Dorsolateral prefrontal cortex (tissue), 120 donors: ENCODE measurements at regions of chr14 and their contacts with region 1.

Region 1: DNA sequence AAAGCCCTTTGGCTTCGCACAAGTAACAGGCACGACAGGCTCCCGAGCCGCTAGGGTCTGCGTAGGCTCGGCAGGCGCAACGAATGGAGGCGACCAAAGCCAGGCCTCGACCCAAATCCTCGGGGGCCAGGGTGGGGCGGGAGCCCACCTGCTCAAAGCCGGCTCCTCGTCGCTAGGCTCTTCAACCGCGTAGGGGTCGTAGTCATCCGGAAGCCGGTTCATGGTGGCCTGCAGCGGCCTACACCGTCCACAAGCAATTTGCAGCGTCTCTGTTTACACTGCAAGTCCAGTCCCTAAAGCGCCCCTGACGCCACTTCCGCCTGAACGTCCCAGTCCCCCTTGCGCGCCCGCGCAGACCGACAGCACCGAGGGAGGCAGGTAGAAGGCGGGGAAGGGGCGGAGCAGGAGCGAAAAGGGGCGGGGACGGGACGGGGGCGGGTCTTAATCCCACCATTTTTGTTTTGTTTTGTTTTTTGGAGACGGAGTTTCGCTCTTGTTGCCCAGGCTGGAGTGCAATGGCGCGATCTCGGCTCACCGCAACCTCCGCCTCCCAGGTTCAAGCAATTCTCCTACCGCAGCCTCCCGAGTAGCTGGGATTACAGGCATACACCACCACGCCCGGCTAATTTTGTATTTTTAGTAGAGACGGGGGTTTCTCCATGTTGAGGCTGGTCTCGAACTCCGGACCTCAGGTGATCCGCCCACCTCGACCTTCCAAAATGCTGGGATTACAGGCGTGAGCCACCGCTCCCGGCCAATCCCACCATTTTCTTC is at the start of gene EAPP:
- DNase-seq: peak; percentile 98 to 99 (median 99)
- H3K4me3 ChIP-seq: peak within 1 kb of the TSS; percentile 65 to 100 (median 92)
- H3K27ac ChIP-seq: peak within 1 kb of the TSS; percentile 58 to 98 (median 94)
- H3K27me3 ChIP-seq: no peaks in the 10 kb centered on the region
- CTCF ChIP-seq: peak in 32 of 56 donors; percentile 9 to 50 (median 25)
- total RNA-seq, gene EAPP: 16.5 to 48.5 (median 35.5) TPM

Region 2: DNA sequence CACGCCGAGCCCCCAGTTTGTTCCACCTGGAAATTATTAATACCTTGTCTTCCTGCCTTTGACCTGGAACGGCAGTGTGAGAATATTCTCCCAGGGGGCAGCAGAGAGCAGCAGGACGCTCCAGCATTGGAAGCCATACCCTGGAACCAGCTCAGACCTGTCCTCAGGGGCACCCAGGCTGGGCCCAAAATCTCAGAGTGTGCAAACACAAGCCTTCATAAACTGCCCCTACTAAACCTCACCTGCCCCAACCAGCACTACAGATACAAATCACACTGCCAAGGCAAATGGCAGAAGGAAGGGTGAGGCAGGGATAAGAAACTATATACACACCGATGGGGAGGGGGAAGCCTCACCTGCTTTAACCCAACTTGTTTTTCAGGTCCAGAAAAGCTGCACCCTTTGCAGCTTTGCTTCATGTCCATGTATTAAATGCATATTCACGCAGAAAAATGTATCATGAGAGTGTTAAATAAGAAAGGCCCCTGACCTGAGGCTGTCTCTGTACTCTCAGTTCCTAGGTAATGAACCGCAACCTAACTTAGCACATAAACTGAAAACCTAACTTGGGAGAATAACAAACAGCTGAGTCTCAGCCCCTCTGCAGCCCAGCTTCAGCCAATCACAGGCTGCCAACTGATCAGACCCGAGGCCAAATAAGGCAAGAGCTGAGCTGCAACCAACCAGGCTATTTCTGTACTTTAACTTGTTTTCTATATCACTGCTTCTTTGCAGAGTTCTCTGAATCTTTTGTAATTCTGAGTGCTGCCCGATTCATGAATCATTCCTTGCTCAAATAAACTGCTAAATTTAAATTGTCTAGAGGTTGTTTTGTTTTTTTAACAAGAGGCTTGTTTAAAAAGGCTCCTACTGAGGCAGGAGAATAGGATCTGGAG is 207.6 kb before region 1 on chr14:
- intact Hi-C with region 1: loop called in 1 of 2 experiments (anchors 10 kb)
- DNase-seq: peak in 9 of 10 donors; percentile 22 to 56 (median 38)
- H3K4me3 ChIP-seq: no peak overlapping the region
- H3K27ac ChIP-seq: no peak overlapping the region
- H3K27me3 ChIP-seq: no peaks in the 10 kb centered on the region
- CTCF ChIP-seq: peak in 55 of 56 donors; percentile 27 to 77 (median 64)

Region 3: DNA sequence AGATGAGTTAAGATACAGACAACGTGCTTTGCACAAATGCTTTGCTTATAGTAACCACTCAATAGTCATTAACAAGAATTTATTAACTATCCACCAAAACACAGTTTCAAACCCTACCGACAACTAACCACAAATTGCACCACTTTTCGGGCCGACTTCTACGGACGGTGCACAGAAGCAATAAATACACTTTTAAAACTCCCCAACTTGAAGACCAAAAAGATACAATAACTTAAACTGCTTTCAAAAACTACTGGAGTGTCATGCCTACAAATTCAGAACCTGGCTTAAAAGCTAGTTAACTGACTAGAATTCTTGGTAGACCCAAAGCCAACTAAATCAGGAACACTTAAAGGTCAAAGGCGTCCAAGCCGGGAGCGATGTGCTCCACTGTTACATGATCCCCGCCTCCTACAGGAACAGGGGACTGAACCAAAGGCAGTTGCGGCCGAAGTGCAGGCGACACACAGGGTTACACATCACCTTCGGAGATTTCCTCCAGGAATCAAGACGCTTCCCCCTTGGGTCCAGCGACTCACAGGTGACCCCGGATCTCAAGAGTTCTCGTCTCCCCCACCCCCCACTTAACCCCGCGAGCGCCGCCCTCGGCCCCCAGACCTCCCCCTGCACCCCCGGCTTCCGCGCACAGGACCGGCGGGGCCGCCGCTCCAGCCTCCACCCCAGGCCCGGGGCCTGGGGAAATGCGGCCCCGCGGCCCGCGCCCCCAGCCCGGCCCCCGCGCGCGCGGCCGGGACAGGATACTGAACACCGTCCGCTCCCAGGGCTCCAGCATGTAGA is 78.1 kb before region 1 on chr14:
- intact Hi-C with region 1: loop called (anchors 5 kb)
- DNase-seq: peak in 9 of 10 donors; percentile 27 to 56 (median 41)
- H3K4me3 ChIP-seq: peak overlapping the region; percentile 59 to 88 (median 77)
- H3K27ac ChIP-seq: peak overlapping the region in 51 of 59 donors; percentile 21 to 94 (median 80)
- H3K27me3 ChIP-seq: no peaks in the 10 kb centered on the region
- CTCF ChIP-seq: peak in 1 of 56 donors; percentile 10

Region 4: GRCh38 chr14:34699873-34700621 is 160.5 kb after region 1 on chr14:
- intact Hi-C with region 1: no loop called
- DNase-seq: no peak
- H3K4me3 ChIP-seq: no peak overlapping the region
- H3K27ac ChIP-seq: peak overlapping the region in 55 of 59 donors; percentile 1 to 84 (median 57)
- H3K27me3 ChIP-seq: no peaks in the 10 kb centered on the region
- CTCF ChIP-seq: no peak